ENCODE measurements at regions of chr2 and their contacts with region 1.

Region 1: DNA sequence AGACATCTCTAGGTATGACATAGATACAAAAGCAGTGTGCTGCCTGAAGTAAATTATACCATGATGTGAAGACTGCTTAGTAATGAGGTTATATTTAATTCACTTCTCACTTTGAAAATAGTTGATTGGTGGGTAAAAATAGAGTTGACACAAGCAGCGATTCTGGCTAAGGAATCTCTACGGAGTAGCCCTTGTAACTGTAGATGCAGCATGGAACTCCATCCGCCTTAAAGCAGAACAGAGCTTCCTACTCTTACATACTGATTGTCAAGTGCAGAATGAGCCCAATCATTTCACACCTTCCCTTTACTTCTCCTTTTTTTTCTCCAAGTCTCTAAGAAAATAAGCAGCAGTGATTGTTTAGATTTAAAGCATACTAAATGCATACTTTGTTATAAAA is 1594.6 kb upstream of the SLC39A10 start:
- DNase-seq: no peak
- ATAC-seq: peak; percentile 41; the same call in 1 of the 3 replicates
- H3K4me3 ChIP-seq: no peak overlapping the region
- H3K27ac ChIP-seq: no peak overlapping the region
- H3K4me1 ChIP-seq: no peaks in the 10 kb centered on the region
- H3K27me3 ChIP-seq: no peaks in the 10 kb centered on the region
- CTCF ChIP-seq: no peak
- EP300 ChIP-seq: no peak
- POLR2A ChIP-seq: no peak
- RAD21 ChIP-seq: no peak

Region 2: GRCh38 chr2:194116861-194117260 is 54.5 kb after region 1 on chr2:
- CTCF ChIA-PET with region 1: no interaction called
- POLR2A ChIA-PET with region 1: no interaction called
- RAD21 ChIA-PET with region 1: no interaction called
- SMC1A ChIA-PET with region 1: no interaction called
- in situ Hi-C with region 1: no loop called
- intact Hi-C with region 1: no loop called
- DNase-seq: no peak
- ATAC-seq: peak; percentile 24; the same call in 1 of the 3 replicates
- H3K4me3 ChIP-seq: no peak overlapping the region
- H3K27ac ChIP-seq: no peak overlapping the region
- H3K4me1 ChIP-seq: no peaks in the 10 kb centered on the region
- H3K27me3 ChIP-seq: no peaks in the 10 kb centered on the region
- CTCF ChIP-seq: no peak
- EP300 ChIP-seq: no peak
- POLR2A ChIP-seq: no peak
- RAD21 ChIP-seq: no peak

Region 3: GRCh38 chr2:194135463-194135862 is 73.1 kb after region 1 on chr2:
- CTCF ChIA-PET with region 1: no interaction called
- POLR2A ChIA-PET with region 1: no interaction called
- RAD21 ChIA-PET with region 1: no interaction called
- SMC1A ChIA-PET with region 1: no interaction called
- in situ Hi-C with region 1: no loop called
- intact Hi-C with region 1: loop called (anchors 2 kb)
- DNase-seq: no peak
- ATAC-seq: no peak
- H3K4me3 ChIP-seq: no peak overlapping the region
- H3K27ac ChIP-seq: no peak overlapping the region
- H3K4me1 ChIP-seq: no peaks in the 10 kb centered on the region
- H3K27me3 ChIP-seq: no peaks in the 10 kb centered on the region
- CTCF ChIP-seq: no peak
- EP300 ChIP-seq: no peak
- POLR2A ChIP-seq: no peak
- RAD21 ChIP-seq: no peak